ENCODE measurements at regions of chr14 and their contacts with region 1.

Region 1: GRCh38 chr14:40629100-40629499 is 977.6 kb upstream of the LRFN5 start:
- DNase-seq: no peak
- H3K4me3 ChIP-seq: no peak overlapping the region
- H3K27ac ChIP-seq: no peak overlapping the region
- H3K4me1 ChIP-seq: no peaks in the 10 kb centered on the region
- H3K27me3 ChIP-seq: no peaks in the 10 kb centered on the region
- CTCF ChIP-seq: no peak

Region 2: GRCh38 chr14:40682133-40682913 is 53.2 kb after region 1 on chr14:
- dilution Hi-C with region 1: loop called (anchors 5 kb)
- DNase-seq: no peak
- H3K4me3 ChIP-seq: no peak overlapping the region
- H3K27ac ChIP-seq: no peak overlapping the region
- H3K4me1 ChIP-seq: no peaks in the 10 kb centered on the region
- H3K27me3 ChIP-seq: no peaks in the 10 kb centered on the region
- CTCF ChIP-seq: no peak